Activated naive CD4-positive, alpha-beta T cell treated with anti-CD3 and anti-CD28 coated beads for 36 hours (primary cell): ENCODE measurements at regions of chr9 and their contacts with region 1.

Region 1: GRCh38 chr9:128723866-128724743 is at the start of gene ZDHHC12:
- DNase-seq: peak; percentile 100
- H3K4me3 Mint-ChIP-seq: peak within 1 kb of the TSS; percentile 97
- H3K27ac Mint-ChIP-seq: peak within 1 kb of the TSS; percentile 94
- H3K4me1 Mint-ChIP-seq: peaks cover 28% of the 10 kb centered on the region
- H3K27me3 Mint-ChIP-seq: no peaks in the 10 kb centered on the region
- total RNA-seq, gene ZDHHC12: 50.9 to 53.1 TPM

Region 2: GRCh38 chr9:128349125-128349524 is 375.0 kb before region 1 on chr9:
- CTCF ChIA-PET with region 1: no interaction called
- intact Hi-C with region 1: no loop called
- DNase-seq: no peak
- H3K4me3 Mint-ChIP-seq: no peak overlapping the region
- H3K27ac Mint-ChIP-seq: peak overlapping the region; percentile 2
- H3K4me1 Mint-ChIP-seq: no peaks in the 10 kb centered on the region
- H3K27me3 Mint-ChIP-seq: no peaks in the 10 kb centered on the region

Region 3: DNA sequence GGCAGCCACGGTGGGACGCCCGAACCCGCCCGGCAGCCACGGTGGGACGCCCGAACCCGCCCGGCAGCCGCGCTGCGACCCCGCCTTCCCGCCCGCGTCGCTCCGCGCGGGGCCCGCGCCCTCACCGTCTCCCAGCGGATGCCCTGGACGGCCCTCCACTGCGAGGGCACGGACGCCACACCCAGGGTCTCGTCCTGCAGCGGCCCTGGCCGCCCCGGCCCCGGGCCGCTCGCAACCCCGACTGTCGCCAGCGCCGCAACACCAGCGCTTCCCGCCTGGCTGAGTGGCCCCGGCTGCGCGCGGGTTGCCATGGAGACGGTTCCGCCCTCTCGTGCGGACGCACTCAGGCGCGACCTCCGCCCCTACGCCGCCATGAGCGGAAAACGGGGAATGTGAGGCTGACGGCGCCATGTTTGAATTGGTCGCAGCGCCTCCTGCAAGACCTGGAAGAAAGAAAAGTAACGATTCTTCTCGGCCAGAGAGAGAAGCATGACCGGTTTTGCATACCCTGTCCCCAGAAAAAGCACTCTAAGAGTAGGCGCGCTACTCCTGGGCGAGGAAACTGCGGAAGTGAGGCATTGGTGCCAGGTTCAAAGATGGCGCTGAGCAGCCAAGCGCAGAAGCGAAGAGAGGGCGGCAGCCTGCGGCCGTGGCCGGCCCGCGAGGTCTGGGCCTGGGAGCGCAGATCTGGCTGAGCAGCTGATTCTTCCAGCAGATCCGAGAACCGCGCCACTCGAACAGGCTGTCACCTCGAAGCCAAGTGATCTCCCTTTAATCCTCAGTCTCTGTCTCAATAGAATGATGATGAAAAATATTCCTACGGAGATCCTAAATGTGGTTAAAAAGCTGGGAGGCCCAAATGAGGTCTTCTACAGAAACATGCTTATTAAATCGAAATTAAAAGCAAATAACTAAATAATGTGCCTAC is 67.4 kb before region 1 on chr9 and contains the start of gene DYNC2I2:
- CTCF ChIA-PET with region 1: no interaction called
- intact Hi-C with region 1: loop called (anchors 1 kb)
- DNase-seq: peak; percentile 97
- H3K4me3 Mint-ChIP-seq: peak within 1 kb of the TSS; percentile 93
- H3K27ac Mint-ChIP-seq: peak within 1 kb of the TSS; percentile 100
- H3K4me1 Mint-ChIP-seq: peaks cover 11% of the 10 kb centered on the region
- H3K27me3 Mint-ChIP-seq: no peaks in the 10 kb centered on the region
- total RNA-seq, gene DYNC2I2: 32.4 to 32.8 TPM

Region 4: GRCh38 chr9:128702445-128702948 is 21.6 kb before region 1 on chr9 and contains the start of gene PKN3:
- CTCF ChIA-PET with region 1: interaction called, 5 read pairs
- intact Hi-C with region 1: loop called (anchors 1 kb)
- DNase-seq: peak; percentile 91
- H3K4me3 Mint-ChIP-seq: peak within 1 kb of the TSS; percentile 84
- H3K27ac Mint-ChIP-seq: peak within 1 kb of the TSS; percentile 19
- H3K4me1 Mint-ChIP-seq: peaks cover 13% of the 10 kb centered on the region
- H3K27me3 Mint-ChIP-seq: no peaks in the 10 kb centered on the region
- total RNA-seq, gene PKN3: 6.3 to 7.3 TPM

Region 5: GRCh38 chr9:128771745-128772519 is 47.8 kb after region 1 on chr9 and contains the start of gene ZER1:
- CTCF ChIA-PET with region 1: no interaction called
- intact Hi-C with region 1: loop called (anchors 1 kb)
- DNase-seq: peak; percentile 95
- H3K4me3 Mint-ChIP-seq: peak within 1 kb of the TSS; percentile 95
- H3K27ac Mint-ChIP-seq: peak within 1 kb of the TSS; percentile 90
- H3K4me1 Mint-ChIP-seq: peaks cover 24% of the 10 kb centered on the region
- H3K27me3 Mint-ChIP-seq: no peaks in the 10 kb centered on the region
- total RNA-seq, gene ZER1: 9.9 to 11.0 TPM

Region 6: DNA sequence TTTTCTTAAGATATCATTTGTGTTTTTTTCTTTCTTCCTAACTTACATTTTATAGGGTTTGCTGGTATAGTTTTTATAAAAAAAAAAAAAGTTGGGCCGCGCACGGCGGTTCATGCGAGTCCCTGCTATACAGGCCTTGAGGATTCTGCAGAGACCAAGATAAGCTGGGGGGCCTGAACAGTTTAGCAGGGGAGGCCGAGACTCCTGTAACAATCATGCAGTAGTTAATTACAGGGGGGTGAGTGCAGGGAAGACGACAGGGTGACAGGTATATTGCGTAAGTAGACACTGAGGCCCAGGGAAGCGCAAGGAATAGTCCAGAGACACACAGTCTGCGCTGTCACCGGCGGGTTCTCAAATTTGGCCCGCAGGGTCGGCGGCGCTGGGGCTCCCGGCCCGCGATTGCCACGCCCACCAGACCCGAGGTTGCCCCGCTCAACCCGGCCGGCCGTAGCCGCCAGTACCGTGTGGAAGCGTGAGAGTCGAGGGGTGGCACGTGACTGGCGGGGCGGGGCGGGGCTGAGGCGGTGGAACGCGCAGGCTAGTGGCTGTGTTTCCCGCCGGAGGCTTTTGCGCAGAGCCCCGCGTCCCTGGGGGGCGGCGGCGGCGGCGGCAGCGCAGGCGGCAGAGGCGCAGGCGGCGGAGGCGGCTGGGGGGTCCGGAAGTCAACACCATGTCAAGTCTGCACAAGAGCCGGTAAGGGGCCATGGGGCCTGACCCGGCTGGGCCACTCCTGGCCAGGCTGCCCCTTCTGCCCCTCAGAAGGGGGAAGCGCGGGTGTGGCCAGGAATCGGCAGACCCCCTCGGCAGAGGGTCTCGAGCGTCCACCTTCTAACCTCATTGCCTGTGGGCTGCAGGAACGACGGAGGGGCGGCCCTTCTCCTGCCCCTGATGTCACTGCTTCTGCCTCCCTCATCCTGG is 62.8 kb after region 1 on chr9 and contains the start of gene TBC1D13:
- CTCF ChIA-PET with region 1: interaction called, 3 read pairs
- intact Hi-C with region 1: loop called (anchors 5 kb)
- DNase-seq: peak; percentile 91
- H3K4me3 Mint-ChIP-seq: peak within 1 kb of the TSS; percentile 90
- H3K27ac Mint-ChIP-seq: peak within 1 kb of the TSS; percentile 81
- H3K4me1 Mint-ChIP-seq: peaks cover 26% of the 10 kb centered on the region
- H3K27me3 Mint-ChIP-seq: no peaks in the 10 kb centered on the region
- total RNA-seq, gene TBC1D13: 8.3 to 9.0 TPM

Region 7: DNA sequence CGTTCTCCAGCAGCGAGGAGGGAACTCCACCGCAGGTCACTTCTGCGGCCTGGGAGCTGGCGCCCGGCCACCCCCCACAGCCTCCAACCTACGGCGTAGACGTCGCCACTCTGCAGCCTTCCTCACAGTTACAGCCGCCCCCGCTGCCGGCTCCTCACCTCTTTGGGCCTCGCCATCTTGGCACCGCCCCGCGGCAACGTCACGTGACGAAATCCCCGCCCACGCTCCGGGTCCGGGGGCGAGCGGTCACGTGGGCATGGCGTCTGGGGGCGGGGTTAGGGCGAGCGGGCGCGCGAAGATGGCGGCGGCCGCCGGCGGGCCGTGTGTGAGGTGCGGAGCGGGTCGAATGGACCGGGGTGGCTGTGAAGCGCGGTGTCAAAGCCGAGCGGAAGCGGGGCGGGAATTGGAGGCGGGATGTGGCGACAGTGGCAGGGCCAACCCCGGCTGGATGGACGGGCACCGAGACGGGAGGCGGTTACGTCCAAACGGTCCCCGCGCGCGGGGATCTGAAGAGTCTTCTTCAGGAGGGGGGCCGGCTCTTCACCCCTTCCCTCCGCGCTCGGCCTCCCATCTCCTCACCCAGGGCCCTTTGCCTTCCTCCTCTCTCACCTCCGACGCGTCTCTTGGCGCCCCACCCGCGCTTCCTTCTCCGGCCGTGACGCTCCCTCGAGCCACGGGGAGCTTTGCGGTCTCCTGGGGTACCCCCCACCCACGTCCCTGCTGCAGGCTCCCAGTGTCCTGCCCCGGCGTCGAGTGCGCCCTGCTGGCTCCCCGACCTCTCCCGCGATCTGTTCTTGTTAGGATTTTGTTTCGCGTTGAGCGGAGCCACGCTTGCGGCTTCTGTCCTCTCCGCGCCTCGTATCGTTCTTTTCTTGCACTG is 223.6 kb after region 1 on chr9 and contains the starts of genes DOLK and NUP188:
- CTCF ChIA-PET with region 1: no interaction called
- intact Hi-C with region 1: loop called (anchors 1 kb)
- DNase-seq: peak; percentile 98
- H3K4me3 Mint-ChIP-seq: peak within 1 kb of the TSS; percentile 97
- H3K27ac Mint-ChIP-seq: peak within 1 kb of the TSS; percentile 94
- H3K4me1 Mint-ChIP-seq: peaks cover 33% of the 10 kb centered on the region
- H3K27me3 Mint-ChIP-seq: no peaks in the 10 kb centered on the region
- total RNA-seq, gene DOLK: 2.5 to 2.7 TPM
- total RNA-seq, gene NUP188: 101 to 112 TPM

Region 8: GRCh38 chr9:129036241-129036922 is 312.3 kb after region 1 on chr9 and contains the start of gene MIGA2:
- CTCF ChIA-PET with region 1: no interaction called
- intact Hi-C with region 1: loop called (anchors 1 kb)
- DNase-seq: peak; percentile 97
- H3K4me3 Mint-ChIP-seq: peak within 1 kb of the TSS; percentile 98
- H3K27ac Mint-ChIP-seq: peak within 1 kb of the TSS; percentile 71
- H3K4me1 Mint-ChIP-seq: peaks cover 30% of the 10 kb centered on the region
- H3K27me3 Mint-ChIP-seq: no peaks in the 10 kb centered on the region
- total RNA-seq, gene MIGA2: 36.3 to 42.7 TPM